ENCODE measurements at regions of chr1 and their contacts with region 1.

Region 1: DNA sequence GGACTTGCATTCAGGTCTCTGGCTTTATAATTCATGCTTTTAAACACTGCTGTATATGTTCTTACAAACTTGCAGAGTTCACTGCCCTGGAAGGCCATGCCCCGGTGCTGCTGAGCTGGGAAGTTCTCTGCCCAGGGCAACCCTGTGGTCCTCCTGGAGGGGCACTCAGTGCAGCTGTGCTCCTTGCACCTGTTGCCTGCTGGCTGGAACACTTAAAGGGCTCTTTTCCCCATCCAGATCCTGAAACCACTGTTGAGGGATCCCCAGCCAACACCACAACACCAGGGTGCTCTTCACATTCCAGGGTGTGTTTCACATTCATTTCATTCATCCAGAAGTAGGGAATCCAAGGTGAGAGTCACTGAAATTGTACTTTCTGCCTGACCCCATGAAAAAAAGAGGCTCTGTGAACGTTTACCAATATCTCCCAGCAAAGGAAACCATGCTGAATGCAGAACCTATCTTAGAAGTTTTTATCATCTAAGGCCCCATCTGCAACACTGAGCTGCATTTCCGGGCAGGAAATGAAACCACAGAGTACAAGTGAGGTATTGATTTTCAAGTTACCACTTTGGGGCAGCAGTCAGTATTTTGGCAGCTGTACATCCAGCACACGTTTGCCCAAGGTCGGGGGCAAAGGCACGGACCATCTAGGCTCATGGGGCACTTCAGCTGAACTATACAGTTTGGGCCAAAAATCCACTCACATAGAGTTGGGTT is 16.4 kb upstream of the KIAA0040 start:
- DNase-seq: peak; percentile 60
- H3K4me3 Mint-ChIP-seq: peak overlapping the region; percentile 81
- H3K27ac Mint-ChIP-seq: peak overlapping the region; percentile 98
- H3K4me1 Mint-ChIP-seq: peaks cover 67% of the 10 kb centered on the region
- H3K27me3 Mint-ChIP-seq: peaks cover 2% of the 10 kb centered on the region

Region 2: DNA sequence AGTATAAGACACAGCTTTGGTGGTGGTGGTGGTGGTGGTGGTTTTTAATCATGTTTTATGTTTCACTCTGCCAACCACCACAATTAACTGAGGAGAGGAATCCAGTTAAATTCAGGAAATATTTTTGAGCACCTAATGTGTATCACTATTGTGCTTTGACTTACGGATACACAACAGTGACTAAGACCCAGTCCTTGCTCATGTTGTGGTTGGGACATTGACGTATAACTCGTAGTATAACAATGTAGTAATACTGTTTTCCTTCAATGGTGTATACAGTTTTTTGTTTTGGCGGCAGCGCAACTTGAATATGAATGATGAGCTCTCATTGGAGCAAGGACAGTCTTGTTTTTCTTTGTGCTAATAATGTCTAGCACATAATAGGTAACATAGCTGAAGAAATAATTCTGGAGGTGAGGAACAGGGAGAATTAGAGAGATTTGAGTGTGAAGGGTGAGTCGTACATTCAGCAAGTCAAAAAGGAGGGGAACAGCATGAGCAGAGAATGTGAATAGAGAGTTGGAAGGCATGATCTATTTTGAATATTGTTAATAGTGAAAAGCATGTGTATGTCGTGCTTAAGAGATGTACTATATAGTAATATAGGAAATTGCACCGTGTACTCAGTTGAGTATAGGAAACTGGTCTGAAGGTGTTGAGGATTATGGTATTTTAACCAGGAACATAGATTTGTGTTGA is 203.7 kb before region 1 on chr1:
- intact Hi-C with region 1: no loop called
- DNase-seq: no peak
- H3K4me3 Mint-ChIP-seq: no peak overlapping the region
- H3K27ac Mint-ChIP-seq: peak overlapping the region; percentile 72
- H3K4me1 Mint-ChIP-seq: peaks cover 57% of the 10 kb centered on the region
- H3K27me3 Mint-ChIP-seq: no peaks in the 10 kb centered on the region

Region 3: DNA sequence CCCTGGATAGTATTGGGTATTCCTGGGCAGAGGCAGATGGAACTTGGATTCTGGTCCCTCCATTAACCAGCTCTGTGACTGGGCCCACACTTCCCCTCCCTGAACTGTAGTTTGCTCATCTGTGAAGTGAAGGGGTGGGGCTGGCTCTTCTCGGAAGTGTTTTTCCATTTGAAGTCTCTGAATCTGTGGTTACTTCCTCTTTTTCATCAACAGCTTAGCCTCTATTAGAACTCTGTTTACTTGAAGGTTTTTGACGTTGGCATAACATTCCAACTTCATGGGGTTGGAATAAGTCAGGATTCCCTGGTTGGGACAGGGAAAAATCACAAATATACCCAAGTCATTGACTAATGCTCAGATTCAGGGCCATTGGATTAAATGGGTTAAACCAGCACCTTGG is 20.0 kb before region 1 on chr1:
- intact Hi-C with region 1: loop called (anchors 1 kb)
- DNase-seq: peak; percentile 60
- H3K4me3 Mint-ChIP-seq: peak overlapping the region; percentile 99
- H3K27ac Mint-ChIP-seq: peak overlapping the region; percentile 84
- H3K4me1 Mint-ChIP-seq: peaks cover 75% of the 10 kb centered on the region
- H3K27me3 Mint-ChIP-seq: no peaks in the 10 kb centered on the region

Region 4: DNA sequence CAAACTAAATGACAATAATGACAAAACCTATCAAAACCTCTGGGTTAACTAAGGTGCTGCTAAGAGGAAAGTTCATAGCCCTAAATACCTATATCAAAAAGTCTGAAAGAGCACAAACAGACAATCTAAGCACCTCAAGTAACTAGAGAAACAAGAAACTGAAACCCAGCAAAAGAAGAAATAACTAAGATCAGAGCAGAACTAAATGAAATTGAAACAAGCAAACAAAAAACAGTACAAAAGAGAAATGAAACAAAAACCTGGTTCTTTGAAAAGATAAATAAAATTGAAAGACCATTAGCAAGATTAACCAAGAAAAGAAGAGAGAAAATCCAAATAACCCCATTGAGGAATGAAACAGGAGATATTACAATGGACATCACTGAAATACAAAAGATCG is 28.5 kb after region 1 on chr1:
- intact Hi-C with region 1: loop called (anchors 2 kb)
- DNase-seq: no peak
- H3K4me3 Mint-ChIP-seq: peak overlapping the region; percentile 0
- H3K27ac Mint-ChIP-seq: peak overlapping the region; percentile 5
- H3K4me1 Mint-ChIP-seq: peaks cover 31% of the 10 kb centered on the region
- H3K27me3 Mint-ChIP-seq: no peaks in the 10 kb centered on the region

Region 5: DNA sequence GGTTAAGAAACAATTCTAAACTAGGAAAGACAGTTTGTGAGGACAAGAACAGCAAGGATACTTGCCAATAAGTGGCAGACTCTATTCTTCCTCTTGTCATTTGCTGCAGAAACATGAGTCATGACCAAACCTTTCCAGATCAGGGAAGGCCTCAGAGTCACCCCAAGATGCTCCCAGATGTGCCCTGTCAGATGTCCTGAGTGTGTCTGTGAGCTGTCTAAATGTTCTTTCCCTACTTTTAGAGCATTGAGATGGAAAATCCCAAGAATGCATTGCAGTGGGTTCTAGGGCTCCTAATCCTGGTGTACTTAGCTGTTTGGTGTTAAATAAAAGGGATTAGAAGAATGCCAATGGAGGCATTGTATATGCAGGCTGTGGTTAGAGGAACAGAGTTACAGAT is 41.1 kb after region 1 on chr1:
- intact Hi-C with region 1: loop called (anchors 1 kb)
- DNase-seq: no peak
- H3K4me3 Mint-ChIP-seq: no peak overlapping the region
- H3K27ac Mint-ChIP-seq: no peak overlapping the region
- H3K4me1 Mint-ChIP-seq: no peaks in the 10 kb centered on the region
- H3K27me3 Mint-ChIP-seq: peaks cover 11% of the 10 kb centered on the region